Posterior vena cava (tissue), 2 donors: ENCODE measurements at regions of chr16 and their contacts with region 1.

Region 1: DNA sequence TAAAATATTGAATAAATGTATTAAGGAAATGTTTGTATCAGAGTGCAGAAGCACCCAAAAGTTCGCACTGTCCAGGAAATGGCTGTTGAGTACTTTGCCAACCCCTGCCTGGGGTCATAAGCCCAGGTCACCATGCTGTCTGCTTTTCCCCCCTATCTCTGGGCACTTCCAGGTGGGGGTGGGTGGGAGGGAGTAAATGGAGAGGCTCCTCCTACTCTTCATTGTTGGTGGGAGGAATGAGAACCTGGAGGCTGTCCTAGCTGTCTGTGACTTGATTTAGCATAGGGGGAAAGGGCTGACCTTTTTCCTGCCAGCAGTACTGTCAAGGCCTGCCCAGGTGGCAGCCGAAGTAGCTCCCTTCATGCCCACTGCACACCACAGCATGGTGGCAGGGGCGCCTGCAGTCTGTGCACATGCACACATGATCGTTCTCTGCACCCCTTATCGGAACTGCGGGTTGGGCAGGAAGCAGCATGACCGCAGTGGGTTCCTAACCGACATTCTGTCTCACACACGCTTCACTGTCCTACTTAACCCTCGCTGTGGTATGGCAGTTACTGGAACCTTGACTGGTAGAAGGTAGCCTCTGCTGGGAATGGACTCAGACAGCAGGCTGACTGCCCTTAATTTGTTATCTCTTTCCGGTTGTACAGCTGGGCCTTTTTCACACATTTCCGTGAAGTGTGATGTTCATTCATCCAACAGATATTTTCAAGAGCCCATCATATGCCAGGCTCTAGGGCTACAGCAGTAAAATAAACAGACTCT is 41.5 kb downstream of the LDHD start:
- DNase-seq: peak; percentile 84

Region 2: DNA sequence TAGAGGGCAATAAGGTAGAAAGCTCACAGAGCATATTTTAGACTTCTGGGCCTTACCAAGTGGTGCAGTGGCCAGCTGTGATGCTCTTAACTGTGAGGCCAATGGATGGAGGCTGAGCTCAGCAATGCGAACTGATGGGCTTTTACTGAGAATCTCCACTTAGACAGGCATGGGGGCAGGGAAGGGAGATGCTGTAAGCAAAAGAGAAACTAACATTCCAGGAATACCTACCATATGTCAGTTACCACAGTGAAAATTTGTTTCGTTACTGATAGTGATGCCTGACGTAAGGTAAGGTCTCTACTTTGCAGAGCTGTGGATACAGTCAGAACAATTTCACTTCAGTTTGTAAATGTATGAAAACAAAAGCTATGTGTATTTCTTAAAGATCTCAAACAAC is 1776.5 kb before region 1 on chr16:
- intact Hi-C with region 1: no loop called
- DNase-seq: no peak

Region 3: GRCh38 chr16:75032655-75033054 is 42.4 kb before region 1 on chr16:
- intact Hi-C with region 1: loop called in 1 of 2 experiments (anchors 1 kb)
- DNase-seq: no peak

Region 4: GRCh38 chr16:75104536-75105235 is 29.6 kb after region 1 on chr16:
- intact Hi-C with region 1: loop called in 1 of 2 experiments (anchors 1 kb)
- DNase-seq: no peak

Region 5: GRCh38 chr16:76607317-76607716 is 1532.2 kb after region 1 on chr16:
- intact Hi-C with region 1: loop called in 1 of 2 experiments (anchors 10 kb)
- DNase-seq: no peak